MCF 10A (cell line): ENCODE measurements at regions of chr17 and their contacts with region 1.

Region 1: GRCh38 chr17:45385331-45385997 is 47.2 kb downstream of the ARHGAP27 start:
- DNase-seq: peak; percentile 87
- H3K4me3 Mint-ChIP-seq: no peak overlapping the region
- H3K27ac Mint-ChIP-seq: no peak overlapping the region
- H3K4me1 Mint-ChIP-seq: peaks cover 5% of the 10 kb centered on the region
- H3K27me3 Mint-ChIP-seq: no peaks in the 10 kb centered on the region
- CTCF ChIP-seq: peak; percentile 94

Region 2: DNA sequence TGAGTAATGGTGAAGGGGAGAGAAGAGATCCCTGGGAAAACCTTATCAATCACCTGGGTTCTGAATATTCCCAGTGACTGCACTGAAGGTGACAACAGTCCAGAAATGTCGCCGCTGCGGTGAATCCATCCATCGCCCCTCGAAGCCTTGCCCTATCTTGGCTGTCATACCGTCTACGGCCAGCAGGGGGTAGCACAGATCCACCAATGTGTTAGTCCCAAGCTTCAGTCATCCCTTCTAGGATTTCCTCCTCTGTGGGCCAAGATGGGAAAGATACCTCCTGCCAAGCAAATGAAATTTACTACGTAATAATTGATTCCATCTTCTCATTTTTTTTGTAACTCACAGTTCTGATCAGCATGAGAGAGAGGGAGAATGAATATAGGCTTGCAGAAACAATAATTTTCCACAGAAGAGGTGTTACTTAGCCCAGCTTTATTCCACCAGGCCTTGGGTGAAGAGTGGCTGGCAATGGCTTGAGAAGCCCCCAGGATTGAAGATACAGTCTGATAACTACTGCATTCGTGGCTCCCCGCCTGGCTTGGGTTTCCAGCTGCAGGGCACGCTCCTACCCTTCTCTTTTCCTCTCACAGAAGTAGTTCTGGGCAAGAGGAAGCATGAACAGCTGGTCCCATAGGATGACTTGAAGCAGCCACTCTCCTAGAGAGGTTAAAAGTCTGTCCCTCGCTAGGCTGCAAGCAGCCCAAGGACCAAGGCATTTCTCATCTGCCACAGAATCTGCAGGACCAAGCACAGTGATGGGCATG is 166.4 kb before region 1 on chr17:
- CTCF ChIA-PET with region 1: interaction called, 29 read pairs
- POLR2A ChIA-PET with region 1: interaction called, 3 read pairs
- intact Hi-C with region 1: loop called (anchors 1 kb)
- DNase-seq: peak; percentile 86
- H3K4me3 Mint-ChIP-seq: no peak overlapping the region
- H3K27ac Mint-ChIP-seq: no peak overlapping the region
- H3K4me1 Mint-ChIP-seq: peaks cover 11% of the 10 kb centered on the region
- H3K27me3 Mint-ChIP-seq: no peaks in the 10 kb centered on the region
- CTCF ChIP-seq: peak; percentile 95

Region 3: DNA sequence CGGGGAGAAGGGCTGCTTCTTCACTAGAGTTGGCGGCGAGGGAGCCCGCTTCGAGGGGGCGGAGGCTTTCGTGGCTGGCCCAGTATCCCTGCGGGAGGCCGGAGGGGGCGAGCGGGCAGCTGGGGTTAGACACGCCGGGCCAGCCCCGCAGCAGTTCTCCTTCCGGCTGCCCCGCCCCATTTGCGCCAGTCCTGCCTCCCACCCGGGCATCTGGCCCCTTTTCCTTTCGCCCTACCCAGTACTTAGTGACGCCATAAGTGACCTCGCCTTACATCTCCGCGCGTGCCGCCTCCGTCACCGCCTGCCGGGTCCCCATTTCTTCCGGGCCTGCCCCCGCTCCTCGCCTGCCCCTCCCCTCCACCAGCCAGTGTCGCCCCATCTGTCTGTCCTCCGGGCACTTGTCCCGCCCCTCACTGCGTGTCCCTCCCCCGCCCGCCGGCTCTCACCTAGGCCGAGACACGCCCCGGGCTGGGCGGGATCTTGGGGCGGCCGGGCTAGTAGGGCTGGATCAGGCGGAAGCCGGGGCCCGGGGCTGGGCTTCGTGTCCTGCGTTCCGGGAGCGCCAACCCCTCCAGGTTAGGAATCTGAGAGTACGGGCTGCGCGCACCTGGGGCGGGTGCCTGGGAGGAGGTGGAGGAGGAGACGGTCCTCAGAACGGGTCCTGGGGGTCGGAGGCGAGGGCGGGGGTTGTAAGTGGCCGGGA is 137.9 kb before region 1 on chr17:
- CTCF ChIA-PET with region 1: interaction called, 4 read pairs
- POLR2A ChIA-PET with region 1: interaction called, 11 read pairs
- intact Hi-C with region 1: loop called (anchors 1 kb)
- DNase-seq: peak; percentile 97
- H3K4me3 Mint-ChIP-seq: peak overlapping the region; percentile 96
- H3K27ac Mint-ChIP-seq: peak overlapping the region; percentile 80
- H3K4me1 Mint-ChIP-seq: peaks cover 20% of the 10 kb centered on the region
- H3K27me3 Mint-ChIP-seq: no peaks in the 10 kb centered on the region
- CTCF ChIP-seq: no peak

Region 4: DNA sequence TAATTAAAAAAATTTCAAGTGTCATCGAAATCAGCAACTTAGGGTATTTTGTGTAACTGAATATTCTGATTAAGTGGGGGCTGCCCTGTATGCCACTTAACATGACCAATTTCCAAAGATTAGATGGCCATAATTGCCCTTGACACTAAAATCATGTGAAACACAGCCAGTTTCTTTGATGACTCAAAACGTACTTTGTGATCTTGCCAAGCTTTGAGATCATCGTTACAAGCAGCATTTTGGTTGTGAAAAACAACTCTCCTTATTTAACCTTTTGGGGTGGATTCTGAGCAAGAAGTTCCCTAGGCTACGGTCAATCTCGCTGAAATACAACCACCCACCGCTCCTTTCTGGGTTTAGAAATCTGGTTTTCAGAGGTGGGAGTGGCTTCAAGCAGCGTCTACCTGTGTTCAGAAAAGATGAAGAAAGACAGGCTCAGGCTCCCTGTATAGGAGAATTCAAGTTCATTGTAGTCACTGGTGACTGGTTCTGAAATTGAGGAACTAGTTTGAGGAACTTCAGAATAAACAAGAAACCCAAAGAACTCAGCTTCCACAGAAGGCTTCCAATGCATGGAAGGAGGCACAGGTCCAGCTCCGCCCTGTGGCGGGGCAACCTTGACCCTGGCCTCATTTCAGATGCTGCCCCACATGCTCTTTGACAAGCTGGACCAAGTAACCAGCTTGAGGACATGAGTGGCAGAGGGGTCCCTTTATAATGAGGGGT is 78.0 kb before region 1 on chr17:
- CTCF ChIA-PET with region 1: interaction called, 10 read pairs
- POLR2A ChIA-PET with region 1: interaction called, 9 read pairs
- intact Hi-C with region 1: no loop called
- DNase-seq: peak; percentile 88
- H3K4me3 Mint-ChIP-seq: peak overlapping the region; percentile 32
- H3K27ac Mint-ChIP-seq: peak overlapping the region; percentile 90
- H3K4me1 Mint-ChIP-seq: peaks cover 21% of the 10 kb centered on the region
- H3K27me3 Mint-ChIP-seq: no peaks in the 10 kb centered on the region
- CTCF ChIP-seq: no peak

Region 5: GRCh38 chr17:45346216-45347015 is 39.0 kb before region 1 on chr17:
- CTCF ChIA-PET with region 1: no interaction called
- POLR2A ChIA-PET with region 1: no interaction called
- intact Hi-C with region 1: no loop called
- DNase-seq: no peak
- H3K4me3 Mint-ChIP-seq: no peak overlapping the region
- H3K27ac Mint-ChIP-seq: no peak overlapping the region
- H3K4me1 Mint-ChIP-seq: peaks cover 6% of the 10 kb centered on the region
- H3K27me3 Mint-ChIP-seq: no peaks in the 10 kb centered on the region
- CTCF ChIP-seq: no peak

Region 6: GRCh38 chr17:45371414-45372327 is 13.8 kb before region 1 on chr17:
- CTCF ChIA-PET with region 1: interaction called, 22 read pairs
- POLR2A ChIA-PET with region 1: interaction called, 26 read pairs
- intact Hi-C with region 1: no loop called
- DNase-seq: peak; percentile 95
- H3K4me3 Mint-ChIP-seq: peak overlapping the region; percentile 83
- H3K27ac Mint-ChIP-seq: peak overlapping the region; percentile 95
- H3K4me1 Mint-ChIP-seq: peaks cover 35% of the 10 kb centered on the region
- H3K27me3 Mint-ChIP-seq: no peaks in the 10 kb centered on the region
- CTCF ChIP-seq: no peak

Region 7: DNA sequence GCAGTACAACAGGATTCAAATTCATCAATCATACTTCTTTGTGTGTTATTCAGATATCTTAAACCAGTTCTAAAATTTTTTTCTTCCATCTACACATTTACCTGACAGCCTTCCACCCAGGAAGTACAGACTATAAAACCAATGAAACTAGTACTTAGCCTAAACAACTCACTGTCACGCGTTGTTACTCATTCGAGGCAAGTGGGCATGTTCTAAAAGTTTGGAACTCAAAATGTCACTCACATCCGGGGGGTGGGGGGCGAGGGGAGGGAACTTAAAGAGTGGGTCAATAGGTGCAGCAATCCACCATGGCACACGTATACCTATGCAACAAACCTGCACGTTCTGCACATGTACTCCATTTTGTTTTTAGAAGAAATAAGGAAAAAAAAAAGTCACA is 195.5 kb after region 1 on chr17:
- CTCF ChIA-PET with region 1: no interaction called
- POLR2A ChIA-PET with region 1: no interaction called
- intact Hi-C with region 1: no loop called
- DNase-seq: no peak
- H3K4me3 Mint-ChIP-seq: no peak overlapping the region
- H3K27ac Mint-ChIP-seq: no peak overlapping the region
- H3K4me1 Mint-ChIP-seq: peaks cover 53% of the 10 kb centered on the region
- H3K27me3 Mint-ChIP-seq: no peaks in the 10 kb centered on the region
- CTCF ChIP-seq: no peak